Uterus (tissue), 4 donors: ENCODE measurements at regions of chr10 and their contacts with region 1.

Region 1: GRCh38 chr10:30247704-30248103 is 101.4 kb downstream of the MTPAP start:
- DNase-seq: no peak
- H3K4me3 ChIP-seq: no peak overlapping the region
- H3K27ac ChIP-seq: no peak overlapping the region
- H3K4me1 ChIP-seq: no peaks in the 10 kb centered on the region
- H3K27me3 ChIP-seq: no peaks in the 10 kb centered on the region
- CTCF ChIP-seq: no peak
- POLR2A ChIP-seq: no peak

Region 2: GRCh38 chr10:29096303-29096824 is 1151.3 kb before region 1 on chr10:
- intact Hi-C with region 1: no loop called
- DNase-seq: no peak
- H3K4me3 ChIP-seq: no peak overlapping the region
- H3K27ac ChIP-seq: no peak overlapping the region
- H3K4me1 ChIP-seq: no peaks in the 10 kb centered on the region
- H3K27me3 ChIP-seq: no peaks in the 10 kb centered on the region
- CTCF ChIP-seq: no peak
- POLR2A ChIP-seq: no peak

Region 3: DNA sequence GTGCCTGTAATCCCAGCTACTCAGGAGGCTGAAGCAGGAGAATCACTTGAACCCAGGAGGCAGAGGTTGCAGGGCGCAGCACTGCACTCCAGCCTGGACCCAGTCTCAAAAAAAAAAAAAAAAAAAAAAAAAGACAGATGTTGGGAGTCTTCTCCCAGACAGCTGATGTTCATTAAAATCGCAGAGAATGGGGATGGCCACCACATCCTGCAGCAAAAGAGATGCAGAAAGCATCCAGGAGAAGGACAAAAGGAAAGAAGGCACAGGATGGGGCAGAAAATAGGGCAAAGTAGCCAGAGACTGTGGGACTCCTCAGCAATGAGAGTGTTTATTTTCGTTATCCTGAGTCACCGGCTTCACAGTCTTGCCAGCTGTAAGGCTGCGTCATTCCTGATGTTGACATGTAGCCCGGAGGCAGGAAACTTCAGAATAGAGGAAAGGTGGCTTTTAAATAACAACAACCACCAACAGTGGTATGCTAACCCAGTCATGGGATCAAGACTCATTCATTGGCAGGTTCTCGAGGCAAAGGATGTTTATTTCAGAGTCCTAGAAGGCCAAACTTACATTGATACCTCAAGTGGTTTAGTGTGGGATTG is 463.4 kb before region 1 on chr10:
- intact Hi-C with region 1: no loop called
- DNase-seq: peak; percentile 68 to 84
- H3K4me3 ChIP-seq: no peak overlapping the region
- H3K27ac ChIP-seq: peak overlapping the region; percentile 68 to 73
- H3K4me1 ChIP-seq: no peaks in the 10 kb centered on the region
- H3K27me3 ChIP-seq: no peaks in the 10 kb centered on the region
- CTCF ChIP-seq: no peak
- POLR2A ChIP-seq: no peak

Region 4: GRCh38 chr10:30002104-30002950 is 245.4 kb before region 1 on chr10:
- intact Hi-C with region 1: loop called (anchors 10 kb)
- DNase-seq: peak; percentile 67 to 80
- H3K4me3 ChIP-seq: no peak overlapping the region
- H3K27ac ChIP-seq: peak overlapping the region in 1 of 2 donors; percentile 78
- H3K4me1 ChIP-seq: no peaks in the 10 kb centered on the region
- H3K27me3 ChIP-seq: no peaks in the 10 kb centered on the region
- CTCF ChIP-seq: peak; percentile 55 to 66 (median 62)
- POLR2A ChIP-seq: no peak

Region 5: DNA sequence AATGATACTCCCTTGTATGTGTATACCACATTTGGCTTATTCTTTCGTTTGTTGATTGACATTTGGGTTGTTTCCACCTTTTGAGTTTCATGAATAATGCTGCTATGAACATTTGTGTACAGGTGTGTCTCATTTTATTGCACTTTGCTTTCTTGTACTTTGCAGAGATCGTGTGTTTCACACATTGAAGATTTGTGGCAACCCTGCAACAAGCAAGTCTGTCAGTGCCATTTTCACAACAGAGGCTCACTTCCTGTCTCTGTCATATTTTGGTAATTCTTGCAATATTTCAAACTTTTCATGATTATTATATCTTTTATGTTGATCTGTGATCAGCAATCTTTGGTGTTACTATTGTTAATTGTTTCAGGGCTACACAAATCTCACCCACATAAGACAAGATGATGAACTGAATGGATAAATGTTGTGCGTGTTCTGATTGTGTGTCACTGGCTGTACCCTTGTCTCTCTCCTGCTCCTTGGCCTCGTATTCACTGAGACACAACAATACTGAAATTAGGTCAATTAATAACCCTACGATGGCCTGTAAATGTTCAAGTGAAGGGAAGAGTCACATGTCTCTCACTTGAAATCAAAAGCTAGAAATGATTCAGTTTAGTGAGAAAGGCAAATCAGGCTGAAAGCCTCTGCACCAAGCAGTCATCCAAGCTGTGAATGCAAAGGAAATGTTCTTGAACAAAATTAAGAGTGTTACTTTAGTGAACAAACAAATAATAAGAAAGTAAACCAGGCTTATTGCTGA is 54.7 kb before region 1 on chr10:
- intact Hi-C with region 1: no loop called
- DNase-seq: no peak
- H3K4me3 ChIP-seq: no peak overlapping the region
- H3K27ac ChIP-seq: no peak overlapping the region
- H3K4me1 ChIP-seq: no peaks in the 10 kb centered on the region
- H3K27me3 ChIP-seq: no peaks in the 10 kb centered on the region
- CTCF ChIP-seq: no peak
- POLR2A ChIP-seq: no peak

Region 6: GRCh38 chr10:30701451-30702173 is 453.9 kb after region 1 on chr10:
- intact Hi-C with region 1: no loop called
- DNase-seq: peak in 1 of 2 donors; percentile 24
- H3K4me3 ChIP-seq: no peak overlapping the region
- H3K27ac ChIP-seq: no peak overlapping the region
- H3K4me1 ChIP-seq: no peaks in the 10 kb centered on the region
- H3K27me3 ChIP-seq: no peaks in the 10 kb centered on the region
- CTCF ChIP-seq: no peak
- POLR2A ChIP-seq: no peak